Stomach (tissue), 19 donors: ENCODE measurements at regions of chr1 and their contacts with region 1.

Region 1: DNA sequence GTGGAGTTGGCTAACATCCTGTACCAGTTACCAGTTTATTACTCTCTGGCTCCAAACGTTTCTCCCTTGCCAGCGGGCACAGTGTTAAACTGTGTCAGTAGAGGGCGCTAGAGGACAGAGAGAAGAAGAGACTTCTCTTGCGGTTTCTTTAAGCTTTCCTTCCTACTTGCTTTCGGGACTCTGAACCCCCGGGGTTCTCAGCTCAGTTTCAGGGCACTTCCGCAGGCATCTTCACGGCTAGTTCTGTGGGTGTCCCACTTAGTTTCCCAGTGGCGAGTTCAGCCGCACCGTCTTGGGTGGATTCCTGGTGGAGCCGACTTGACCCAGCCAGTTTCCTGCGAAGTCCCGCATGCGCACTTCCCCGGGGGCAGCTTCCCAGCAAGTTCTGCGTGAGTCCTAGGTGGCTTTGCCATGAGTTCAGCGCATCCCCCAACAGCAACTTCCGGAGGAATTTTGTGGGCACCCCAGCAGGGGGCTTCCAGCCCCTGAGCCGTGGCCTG is 37.9 kb upstream of the BTG2 start:
- DNase-seq: peak; percentile 88 to 95
- H3K4me3 ChIP-seq: peak overlapping the region; percentile 44 to 55 (median 50)
- H3K27ac ChIP-seq: peak overlapping the region; percentile 60 to 87 (median 78)
- H3K4me1 ChIP-seq: peaks cover 0 to 23% (median 12%) of the 10 kb centered on the region in 4 donors
- H3K27me3 ChIP-seq: no peaks in the 10 kb centered on the region
- CTCF ChIP-seq: peak in 5 of 7 experiments; percentile 86 to 97 (median 90)
- EP300 ChIP-seq: no peak
- POLR2A ChIP-seq: no peak

Region 2: GRCh38 chr1:203486618-203487370 is 219.4 kb after region 1 on chr1:
- intact Hi-C with region 1: loop called (anchors 5 kb)
- DNase-seq: no peak
- H3K4me3 ChIP-seq: peak overlapping the region; percentile 38 to 46 (median 40)
- H3K27ac ChIP-seq: peak overlapping the region; percentile 11 to 87 (median 79)
- H3K4me1 ChIP-seq: peaks cover 5 to 34% (median 20%) of the 10 kb centered on the region in 4 donors
- H3K27me3 ChIP-seq: no peaks in the 10 kb centered on the region
- CTCF ChIP-seq: no peak
- EP300 ChIP-seq: no peak
- POLR2A ChIP-seq: no peak